ENCODE measurements at regions of chr5 and their contacts with region 1.

Region 1: GRCh38 chr5:151659001-151659754 is 27.5 kb downstream of the SPARC start:
- DNase-seq: peak; percentile 73 to 93
- H3K4me3 ChIP-seq: no peak overlapping the region
- H3K27ac ChIP-seq: peak overlapping the region in 1 of 5 donors; percentile 15
- H3K4me1 ChIP-seq: peaks cover 2 to 22% (median 8%) of the 10 kb centered on the region in 4 donors
- H3K27me3 ChIP-seq: no peaks in the 10 kb centered on the region
- CTCF ChIP-seq: peak in 6 of 7 experiments; percentile 22 to 84 (median 68)
- EP300 ChIP-seq: no peak
- POLR2A ChIP-seq: no peak

Region 2: GRCh38 chr5:151374539-151374938 is 284.6 kb before region 1 on chr5:
- intact Hi-C with region 1: no loop called
- DNase-seq: no peak
- H3K4me3 ChIP-seq: no peak overlapping the region
- H3K27ac ChIP-seq: no peak overlapping the region
- H3K4me1 ChIP-seq: no peaks in the 10 kb centered on the region
- H3K27me3 ChIP-seq: no peaks in the 10 kb centered on the region
- CTCF ChIP-seq: no peak
- EP300 ChIP-seq: no peak
- POLR2A ChIP-seq: no peak

Region 3: DNA sequence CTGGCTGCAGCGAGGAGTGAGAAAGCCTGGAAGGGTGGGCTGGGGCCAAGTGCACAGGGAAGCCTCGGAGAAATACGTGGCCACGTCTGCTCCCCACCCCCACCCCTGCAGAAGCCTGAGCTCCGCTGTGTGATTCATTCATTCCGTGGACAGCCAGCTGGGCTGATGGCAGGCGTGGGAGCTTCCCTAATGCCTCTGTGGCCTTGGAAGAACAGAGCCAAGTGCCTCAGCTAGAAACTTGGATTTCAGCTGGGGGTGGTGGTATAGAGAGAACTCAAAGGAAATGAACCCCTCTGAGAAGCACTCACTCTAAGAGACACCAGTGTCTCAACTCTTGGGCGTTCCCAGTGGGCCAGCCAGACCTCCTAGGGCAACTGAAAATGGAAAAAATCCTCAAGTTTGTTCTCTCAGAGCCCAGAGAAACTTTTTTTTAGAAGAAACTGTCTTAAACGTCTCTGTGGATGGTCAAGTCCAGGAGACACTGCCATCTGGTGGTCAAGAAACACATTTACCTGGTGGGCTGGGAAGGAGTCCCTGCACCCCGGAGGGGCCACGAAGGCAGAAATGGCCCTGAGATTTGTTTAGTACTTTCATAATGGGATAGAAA is 81.3 kb after region 1 on chr5:
- intact Hi-C with region 1: loop called (anchors 5 kb)
- DNase-seq: peak; percentile 29 to 91
- H3K4me3 ChIP-seq: no peak overlapping the region
- H3K27ac ChIP-seq: peak overlapping the region in 4 of 5 donors; percentile 59 to 80 (median 72)
- H3K4me1 ChIP-seq: peaks cover 10 to 26% (median 18%) of the 10 kb centered on the region in 4 donors
- H3K27me3 ChIP-seq: no peaks in the 10 kb centered on the region
- CTCF ChIP-seq: peak in 5 of 7 experiments; percentile 62 to 88 (median 81)
- EP300 ChIP-seq: no peak
- POLR2A ChIP-seq: no peak

Region 4: GRCh38 chr5:151935135-151935695 is 276.0 kb after region 1 on chr5:
- intact Hi-C with region 1: no loop called
- DNase-seq: no peak
- H3K4me3 ChIP-seq: no peak overlapping the region
- H3K27ac ChIP-seq: no peak overlapping the region
- H3K4me1 ChIP-seq: no peaks in the 10 kb centered on the region
- H3K27me3 ChIP-seq: no peaks in the 10 kb centered on the region
- CTCF ChIP-seq: no peak
- EP300 ChIP-seq: no peak
- POLR2A ChIP-seq: no peak

Measured in stomach (tissue), 19 donors.